ENCODE measurements at regions of chr6 and their contacts with region 1.

Region 1: DNA sequence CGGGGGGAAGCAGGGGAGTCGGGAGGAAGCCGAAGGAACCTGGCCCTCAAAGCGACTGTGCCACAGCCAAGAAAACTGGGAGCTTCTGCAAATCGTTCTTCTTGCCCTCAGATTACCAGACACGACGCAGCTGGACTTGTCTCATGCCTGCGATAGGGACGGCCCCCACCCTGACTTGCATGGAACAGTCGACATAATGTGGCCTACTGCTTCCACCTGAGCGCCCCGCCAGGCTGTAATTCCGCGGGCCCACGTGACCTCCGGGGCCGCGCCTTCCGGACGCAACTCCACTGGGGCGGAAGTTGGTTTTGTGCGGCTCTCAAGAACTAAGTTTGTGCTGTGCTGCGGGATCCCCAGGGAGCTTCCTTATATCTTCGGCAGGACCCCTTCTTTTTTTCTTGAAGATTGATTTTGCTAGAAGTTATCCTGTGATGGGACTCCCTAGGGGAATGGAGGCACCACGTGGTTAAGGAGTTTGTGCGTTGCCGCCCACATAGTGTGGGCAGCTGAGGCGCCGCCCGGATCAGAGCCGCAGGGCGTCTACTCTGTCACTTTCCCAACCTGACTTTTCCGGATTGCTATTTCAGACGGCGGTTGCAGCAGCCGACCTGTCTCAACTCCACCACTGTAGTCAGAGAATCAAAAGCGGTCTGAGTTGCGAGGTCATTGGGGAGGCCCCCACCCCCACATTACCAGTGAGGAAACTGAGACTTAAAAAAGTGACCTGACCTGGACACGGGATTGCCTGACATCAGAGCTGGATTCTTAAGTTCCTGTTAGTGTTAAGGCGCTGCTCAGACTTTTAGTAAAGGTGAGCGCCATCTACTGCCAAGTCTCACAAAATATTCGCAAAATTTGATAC is 540 bp upstream of the CD164 start:
- DNase-seq: peak; percentile 81 to 96
- H3K4me3 ChIP-seq: peak overlapping the region; percentile 84 to 95
- H3K27ac ChIP-seq: peak overlapping the region; percentile 99
- H3K4me1 ChIP-seq: peaks cover 0 to 17% of the 10 kb centered on the region in 2 donors
- H3K27me3 ChIP-seq: no peaks in the 10 kb centered on the region
- CTCF ChIP-seq: peak; percentile 47 to 66 (median 57)

Region 2: DNA sequence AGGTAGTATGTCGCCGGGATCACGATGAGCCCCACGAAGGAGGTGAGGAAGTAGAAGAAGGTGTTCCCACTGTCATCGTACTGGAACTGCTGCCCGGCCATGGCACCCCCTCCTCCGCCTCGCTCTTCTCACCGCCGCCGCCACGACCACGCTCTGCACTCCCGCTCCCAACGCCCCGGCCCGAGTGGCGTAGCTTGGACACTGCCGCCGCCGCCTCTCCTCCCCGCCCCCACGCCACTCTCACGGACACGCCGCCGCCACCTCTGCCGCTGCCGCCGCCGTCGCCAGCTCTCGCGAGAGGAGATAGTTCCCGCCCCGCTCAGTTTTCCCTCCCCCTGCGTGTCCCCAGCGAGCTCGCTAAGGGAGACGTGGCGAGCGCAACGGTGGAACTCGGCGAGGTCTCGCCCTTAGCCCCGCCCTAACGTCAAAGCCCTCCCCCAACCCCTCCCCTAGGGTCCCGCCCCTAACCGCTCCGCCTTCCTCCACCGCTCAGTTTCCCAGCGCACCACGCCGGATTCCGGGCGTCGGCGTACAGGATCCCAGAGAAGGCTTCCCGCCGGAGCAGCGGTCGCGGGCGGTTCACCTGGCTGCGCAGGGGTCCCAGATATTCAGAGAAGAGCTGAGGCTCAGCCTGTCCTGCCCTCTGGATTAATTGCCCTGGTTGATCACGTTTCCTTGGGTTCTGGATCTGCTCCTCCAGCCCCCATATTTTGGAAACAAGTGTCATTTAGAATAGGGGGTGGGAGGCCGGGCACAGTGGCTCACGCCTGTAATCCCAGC is 1424.7 kb before region 1 on chr6 and contains the start of gene SEC63:
- intact Hi-C with region 1: loop called (anchors 2 kb)
- DNase-seq: peak; percentile 89 to 98
- H3K4me3 ChIP-seq: peak within 1 kb of the TSS; percentile 78 to 87
- H3K27ac ChIP-seq: peak within 1 kb of the TSS; percentile 72 to 83
- H3K4me1 ChIP-seq: peaks cover 0 to 21% of the 10 kb centered on the region in 2 donors
- H3K27me3 ChIP-seq: no peaks in the 10 kb centered on the region
- CTCF ChIP-seq: no peak
- total RNA-seq, gene SEC63: 13.1 TPM

Region 3: GRCh38 chr6:108896111-108896661 is 486.6 kb before region 1 on chr6:
- intact Hi-C with region 1: loop called (anchors 2 kb)
- DNase-seq: no peak
- H3K4me3 ChIP-seq: no peak overlapping the region
- H3K27ac ChIP-seq: peak overlapping the region; percentile 78 to 82
- H3K4me1 ChIP-seq: peaks cover 9 to 30% of the 10 kb centered on the region in 2 donors
- H3K27me3 ChIP-seq: no peaks in the 10 kb centered on the region
- CTCF ChIP-seq: no peak

Region 4: GRCh38 chr6:109187399-109188114 is 195.2 kb before region 1 on chr6:
- intact Hi-C with region 1: loop called (anchors 1 kb)
- DNase-seq: peak in 1 of 2 donors; percentile 73
- H3K4me3 ChIP-seq: no peak overlapping the region
- H3K27ac ChIP-seq: no peak overlapping the region
- H3K4me1 ChIP-seq: no peaks in the 10 kb centered on the region
- H3K27me3 ChIP-seq: no peaks in the 10 kb centered on the region
- CTCF ChIP-seq: peak; percentile 86 to 98 (median 96)

Region 5: DNA sequence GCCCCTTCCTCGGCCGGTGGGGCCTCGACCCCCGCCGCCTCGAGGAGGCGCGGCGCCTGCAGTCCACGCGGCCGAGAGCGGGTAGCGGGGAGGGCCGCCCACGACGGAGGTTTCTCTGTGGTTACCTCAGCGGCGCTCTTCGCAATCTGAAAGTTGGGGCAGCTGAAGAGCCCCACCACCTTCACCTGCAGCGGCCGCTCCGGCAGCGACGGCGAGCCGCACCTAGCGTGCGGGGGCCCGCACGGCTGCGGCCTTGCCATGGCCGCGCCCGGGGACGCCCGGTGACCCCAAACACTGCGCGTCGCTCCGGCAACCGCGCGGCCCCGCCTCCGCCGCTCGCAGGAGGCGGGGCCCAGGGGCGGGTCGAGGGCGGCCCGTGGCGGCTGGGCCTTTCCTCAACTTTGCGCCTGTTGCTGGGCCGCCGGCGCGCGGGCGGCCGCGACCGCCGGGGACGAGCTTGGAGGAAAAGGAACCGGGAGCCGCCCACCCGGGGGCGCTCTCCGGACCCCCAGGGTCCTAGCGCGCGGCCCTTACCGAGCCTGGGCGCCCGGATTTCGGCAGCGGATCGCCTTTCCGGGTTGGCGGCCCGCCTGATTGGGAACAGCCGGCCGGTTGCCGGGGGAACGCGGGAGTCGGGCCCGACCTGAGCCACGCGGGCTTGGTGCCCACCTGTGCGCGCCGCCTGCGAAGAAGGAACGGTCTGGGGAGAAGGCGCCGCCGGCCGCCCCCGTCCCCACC is 57.7 kb after region 1 on chr6 and contains the starts of genes PPIL6 and SMPD2:
- intact Hi-C with region 1: loop called (anchors 1 kb)
- DNase-seq: peak in 1 of 2 donors; percentile 93
- H3K4me3 ChIP-seq: peak within 1 kb of the TSS; percentile 70 to 84
- H3K27ac ChIP-seq: peak within 1 kb of the TSS; percentile 77 to 81
- H3K4me1 ChIP-seq: peaks cover 0 to 10% of the 10 kb centered on the region in 2 donors
- H3K27me3 ChIP-seq: no peaks in the 10 kb centered on the region
- CTCF ChIP-seq: peak; percentile 25 to 39 (median 32)
- total RNA-seq, gene PPIL6: 0.11 TPM
- total RNA-seq, gene SMPD2: 14.2 TPM

Region 6: DNA sequence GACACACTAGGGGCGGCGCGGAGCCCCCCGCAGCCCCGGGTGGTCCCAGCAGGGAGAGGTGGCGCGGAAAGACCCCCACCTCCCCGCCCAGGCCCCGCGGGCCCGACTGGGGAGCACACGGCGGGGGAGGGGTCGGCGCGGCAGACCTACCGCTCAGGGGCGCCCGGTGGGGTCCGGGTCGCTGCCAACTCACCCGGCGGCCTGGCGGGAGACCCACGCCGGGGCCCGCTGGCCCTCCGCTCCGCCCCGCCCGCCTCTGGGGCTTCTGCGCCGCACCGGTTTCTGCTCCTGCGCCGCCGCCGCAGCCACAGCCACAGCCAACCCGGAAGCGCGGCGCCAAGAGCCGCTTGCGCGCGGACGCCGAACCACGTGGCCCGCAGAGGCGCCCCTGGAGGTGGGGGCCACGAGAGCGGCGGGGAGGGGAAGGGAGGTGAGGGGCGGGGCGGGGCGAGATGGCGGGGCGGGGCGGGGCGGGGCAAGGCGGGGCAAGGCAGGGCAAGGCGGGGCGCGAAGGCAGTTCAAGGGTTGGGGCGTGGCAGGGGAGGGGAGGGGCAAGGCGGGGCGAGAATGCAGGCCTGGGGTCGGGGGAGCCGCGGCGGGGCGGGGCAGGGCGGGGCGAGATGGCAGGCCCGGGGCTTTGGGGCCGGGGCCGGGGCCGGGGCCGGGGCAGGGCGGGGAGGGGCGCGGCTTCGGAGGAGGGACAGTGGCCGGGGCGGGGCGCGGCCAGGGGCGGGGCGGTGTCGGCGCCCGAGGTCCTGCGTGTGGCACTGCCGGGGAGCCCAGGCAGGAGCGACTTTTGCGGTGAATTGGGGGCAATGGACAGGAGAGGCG is 100.3 kb after region 1 on chr6 and contains the start of gene ZBTB24:
- intact Hi-C with region 1: loop called (anchors 1 kb)
- DNase-seq: peak; percentile 61 to 94
- H3K4me3 ChIP-seq: peak within 1 kb of the TSS; percentile 88 to 99
- H3K27ac ChIP-seq: peak within 1 kb of the TSS; percentile 78 to 81
- H3K4me1 ChIP-seq: peaks cover 8 to 31% of the 10 kb centered on the region in 2 donors
- H3K27me3 ChIP-seq: no peaks in the 10 kb centered on the region
- CTCF ChIP-seq: peak in 1 of 3 experiments; percentile 14
- total RNA-seq, gene ZBTB24: 10.2 TPM